ENCODE measurements at regions of chr11 and their contacts with region 1.

Region 1: DNA sequence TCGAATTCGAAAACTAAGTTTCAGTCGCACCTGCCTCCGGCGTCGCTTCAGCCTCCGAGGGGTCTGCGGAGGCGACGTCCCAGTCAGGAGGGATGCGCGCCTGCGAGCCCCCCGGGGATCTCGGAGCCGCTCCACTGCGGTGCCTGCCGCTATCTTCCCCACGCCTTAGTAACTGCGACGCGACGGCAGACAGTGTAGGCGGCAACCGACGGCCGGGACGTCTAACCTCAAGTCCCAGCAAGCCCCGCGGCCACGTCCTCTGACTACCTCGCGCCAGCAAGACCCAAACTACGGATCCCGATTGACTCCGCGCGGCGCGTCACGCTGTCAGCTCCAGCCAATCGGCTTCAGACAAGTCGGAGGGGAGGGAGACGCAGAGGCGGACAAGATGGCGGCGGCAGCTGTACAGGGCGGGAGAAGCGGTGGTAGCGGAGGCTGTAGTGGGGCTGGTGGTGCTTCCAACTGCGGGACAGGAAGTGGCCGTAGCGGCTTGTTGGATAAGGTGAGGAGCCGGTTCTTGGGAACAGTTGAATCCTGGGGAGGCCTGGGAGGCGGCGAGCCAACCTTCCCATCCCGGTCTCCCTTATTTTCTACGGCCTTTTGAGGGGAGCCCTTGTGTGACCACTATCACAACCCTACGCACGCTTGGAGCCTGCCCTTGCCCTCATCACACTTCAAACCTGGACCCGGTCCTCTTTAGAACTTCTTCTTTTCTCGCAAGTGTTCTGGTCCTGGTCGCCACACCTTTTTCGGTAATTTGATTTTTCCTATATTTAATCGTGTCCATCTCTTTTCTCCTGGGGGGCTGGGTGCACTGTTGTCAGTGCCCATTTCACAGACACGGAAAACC is at the starts of genes SPCS2 and XRRA1:
- DNase-seq: peak; percentile 96 to 99 (median 97)
- H3K4me3 ChIP-seq: peak within 1 kb of the TSS; percentile 78 to 100
- H3K4me3 Mint-ChIP-seq: peak within 1 kb of the TSS; percentile 93 to 100 (median 98)
- H3K27ac ChIP-seq: peak within 1 kb of the TSS; percentile 89
- H3K27ac Mint-ChIP-seq: peak within 1 kb of the TSS; percentile 93 to 100 (median 96)
- H3K4me1 ChIP-seq: peaks cover 52% of the 10 kb centered on the region
- H3K4me1 Mint-ChIP-seq: peaks cover 38 to 56% (median 53%) of the 10 kb centered on the region in 4 donors
- H3K27me3 ChIP-seq: no peaks in the 10 kb centered on the region
- H3K27me3 Mint-ChIP-seq: no peaks in the 10 kb centered on the region
- total RNA-seq, gene SPCS2: 145 to 148 TPM
- total RNA-seq, gene XRRA1: 18.8 to 21.1 TPM

Region 2: DNA sequence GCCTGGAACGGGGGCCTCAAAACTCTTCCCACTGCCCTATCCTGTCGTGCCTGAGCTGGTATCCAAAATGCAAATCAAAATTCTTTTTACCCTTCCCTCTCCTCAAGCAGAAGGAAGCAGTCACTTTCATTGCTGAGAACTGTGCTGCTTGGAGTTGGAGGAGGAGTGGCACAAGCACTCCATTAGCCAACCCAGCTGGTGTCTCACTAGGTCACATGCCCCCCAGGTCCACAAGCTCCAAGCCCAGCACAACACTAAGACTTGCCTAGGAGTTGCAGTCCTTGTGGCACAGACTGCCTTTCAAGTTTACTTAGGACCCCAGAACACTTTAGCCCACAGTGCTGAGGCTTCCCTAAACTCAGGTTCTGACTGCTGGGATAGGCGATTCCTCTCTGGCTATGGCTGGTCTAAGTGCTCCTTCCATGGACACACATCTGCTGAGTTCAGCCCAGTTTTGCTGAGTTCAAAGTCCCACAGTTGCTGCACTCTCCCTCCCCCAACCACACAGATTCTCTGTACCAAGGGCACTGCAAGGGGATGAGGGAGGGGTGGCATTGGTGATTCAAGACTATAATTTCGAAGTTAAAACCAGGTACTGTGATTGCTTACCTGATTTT is 286.5 kb before region 1 on chr11:
- CTCF ChIA-PET with region 1: no interaction called
- POLR2A ChIA-PET with region 1: no interaction called
- intact Hi-C with region 1: no loop called
- DNase-seq: peak in 1 of 5 donors; percentile 39
- H3K4me3 ChIP-seq: no peak overlapping the region
- H3K4me3 Mint-ChIP-seq: no peak overlapping the region
- H3K27ac ChIP-seq: no peak overlapping the region
- H3K27ac Mint-ChIP-seq: peak overlapping the region in 2 of 7 donors; percentile 2 to 30
- H3K4me1 ChIP-seq: no peaks in the 10 kb centered on the region
- H3K4me1 Mint-ChIP-seq: no peaks in the 10 kb centered on the region
- H3K27me3 ChIP-seq: no peaks in the 10 kb centered on the region
- H3K27me3 Mint-ChIP-seq: no peaks in the 10 kb centered on the region

Region 3: DNA sequence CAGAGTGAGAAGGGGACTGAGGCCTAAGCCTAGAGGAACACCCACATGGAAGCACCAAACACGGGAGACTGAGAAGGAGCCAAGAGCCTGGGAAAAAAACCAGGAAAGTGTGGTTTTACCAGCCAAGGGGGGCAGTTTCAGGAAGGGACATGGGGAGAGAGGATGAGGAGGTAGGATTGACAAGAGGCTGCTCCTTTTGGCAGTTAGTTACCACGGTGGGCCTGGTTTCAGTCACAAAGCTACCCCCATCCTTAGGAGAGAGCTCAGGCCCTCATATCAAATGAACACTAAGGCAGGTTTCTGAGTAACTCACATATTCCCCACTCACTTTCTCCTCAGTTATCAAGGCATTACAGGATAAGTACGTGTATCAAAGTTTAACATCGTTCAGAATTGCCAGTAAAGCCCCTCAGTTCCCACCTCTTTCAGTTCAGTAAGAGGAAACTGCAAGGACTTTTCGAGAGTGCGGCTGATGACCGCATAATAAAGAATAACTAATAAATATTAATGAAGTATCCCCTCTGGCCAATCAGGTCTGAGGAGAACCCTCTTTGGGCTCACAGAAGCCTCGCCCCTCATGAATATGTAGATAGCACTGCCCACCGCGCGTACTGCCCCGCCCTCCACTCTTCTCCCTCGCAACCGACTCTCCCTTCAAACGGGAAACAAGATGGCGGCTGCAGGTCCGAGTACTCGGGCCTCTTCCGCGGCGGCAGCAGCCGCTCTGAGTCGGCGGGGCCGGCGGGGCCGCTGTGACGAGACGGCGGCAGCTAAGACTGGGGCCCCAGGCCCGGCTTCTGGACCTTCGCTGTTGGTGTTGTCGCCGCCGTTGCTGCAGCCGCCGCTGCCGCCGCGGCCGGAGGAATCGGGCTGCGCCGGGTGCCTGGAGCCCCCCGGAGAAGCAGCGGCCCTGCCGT is 200.7 kb before region 1 on chr11 and contains the start of gene RNF169:
- CTCF ChIA-PET with region 1: no interaction called
- POLR2A ChIA-PET with region 1: interaction called, 4 read pairs
- intact Hi-C with region 1: loop called (anchors 1 kb)
- DNase-seq: peak; percentile 88 to 95 (median 89)
- H3K4me3 ChIP-seq: peak within 1 kb of the TSS; percentile 63 to 73
- H3K4me3 Mint-ChIP-seq: peak within 1 kb of the TSS; percentile 89 to 97 (median 92)
- H3K27ac ChIP-seq: peak within 1 kb of the TSS; percentile 72
- H3K27ac Mint-ChIP-seq: peak within 1 kb of the TSS; percentile 84 to 98 (median 94)
- H3K4me1 ChIP-seq: peaks cover 38% of the 10 kb centered on the region
- H3K4me1 Mint-ChIP-seq: peaks cover 29 to 59% (median 38%) of the 10 kb centered on the region in 4 donors
- H3K27me3 ChIP-seq: no peaks in the 10 kb centered on the region
- H3K27me3 Mint-ChIP-seq: no peaks in the 10 kb centered on the region
- total RNA-seq, gene RNF169: 24.6 to 25.0 TPM

Region 4: DNA sequence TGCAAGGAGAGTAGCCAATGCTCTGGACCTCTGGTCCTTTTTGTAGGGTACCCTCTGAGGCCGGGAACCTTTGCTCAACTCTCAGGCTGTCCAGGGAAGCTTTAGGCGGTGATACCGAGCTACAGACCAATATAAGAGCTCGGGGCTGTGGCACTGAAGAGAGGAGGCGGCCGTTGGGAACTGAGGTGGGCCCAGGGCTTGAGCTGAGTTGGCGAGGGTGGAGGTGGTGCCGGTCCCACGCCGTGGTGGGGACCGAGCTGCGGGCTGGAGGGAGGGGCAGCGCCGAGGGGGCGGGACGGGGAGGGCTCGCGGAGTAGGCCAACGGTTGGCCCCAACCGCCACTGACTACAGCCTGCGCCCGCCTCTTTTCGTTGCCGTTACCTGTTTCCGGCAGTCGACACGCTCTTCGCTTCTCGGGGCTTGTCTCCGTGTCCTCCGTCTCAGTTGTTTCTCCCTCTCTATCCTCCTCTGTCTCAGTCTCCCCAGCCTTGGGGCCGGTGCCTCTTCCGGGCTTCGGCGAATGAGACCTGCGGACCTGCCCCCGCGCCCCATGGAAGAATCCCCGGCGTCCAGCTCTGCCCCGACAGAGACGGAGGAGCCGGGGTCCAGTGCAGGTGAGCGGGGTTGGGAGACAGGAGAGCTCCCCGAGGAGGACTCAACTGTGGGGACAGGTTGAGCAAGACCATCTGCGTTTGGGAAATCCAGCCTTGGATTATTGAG is 39.6 kb after region 1 on chr11 and contains the start of gene NEU3:
- CTCF ChIA-PET with region 1: no interaction called
- POLR2A ChIA-PET with region 1: interaction called, 25 read pairs
- intact Hi-C with region 1: loop called (anchors 1 kb)
- DNase-seq: peak; percentile 77 to 86 (median 79)
- H3K4me3 ChIP-seq: peak within 1 kb of the TSS; percentile 77
- H3K4me3 Mint-ChIP-seq: peak within 1 kb of the TSS; percentile 90 to 97 (median 94)
- H3K27ac ChIP-seq: peak within 1 kb of the TSS; percentile 68
- H3K27ac Mint-ChIP-seq: peak within 1 kb of the TSS; percentile 87 to 95 (median 89)
- H3K4me1 ChIP-seq: peaks cover 23% of the 10 kb centered on the region
- H3K4me1 Mint-ChIP-seq: peaks cover 20 to 32% (median 26%) of the 10 kb centered on the region in 4 donors
- H3K27me3 ChIP-seq: no peaks in the 10 kb centered on the region
- H3K27me3 Mint-ChIP-seq: no peaks in the 10 kb centered on the region
- total RNA-seq, gene NEU3: 14.0 to 15.7 TPM